Right ventricle myocardium superior (tissue), 1 donor: ENCODE measurements at regions of chr12 and their contacts with region 1.

Region 1: DNA sequence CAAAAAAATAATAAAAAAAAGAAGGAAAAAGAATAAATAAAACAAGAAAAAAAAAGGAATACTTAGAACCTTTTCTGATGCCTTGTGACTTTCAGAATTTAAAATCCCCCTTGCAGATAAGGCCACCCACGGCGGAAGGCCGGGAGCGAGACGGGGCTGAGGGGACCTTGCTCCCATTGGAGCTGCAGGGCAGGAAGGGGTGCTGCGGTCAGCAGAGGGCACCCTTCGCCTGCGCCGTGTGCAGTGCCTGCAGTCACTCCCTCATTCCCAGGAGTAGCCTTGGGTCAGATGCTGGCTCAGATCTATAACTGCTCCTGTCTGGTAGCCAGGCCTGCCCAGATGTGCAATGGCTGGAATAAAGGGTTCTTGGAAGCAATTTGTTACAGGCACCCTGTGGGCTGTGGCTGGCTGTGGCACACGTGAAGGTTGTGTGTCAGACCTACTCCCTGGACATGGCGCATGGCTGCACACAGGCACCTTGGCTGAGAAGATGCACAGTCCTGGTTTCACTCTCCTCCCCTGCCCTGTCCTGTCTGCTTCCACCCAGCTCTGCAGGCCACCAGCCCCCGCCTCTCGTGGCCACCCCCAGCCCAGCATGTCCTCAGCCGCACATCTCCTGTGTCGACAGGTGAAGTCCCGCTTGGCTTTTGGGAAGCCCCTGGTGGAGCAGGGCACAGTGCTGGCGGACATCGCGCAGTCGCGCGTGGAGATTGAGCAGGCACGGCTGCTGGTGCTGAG is 13.4 kb upstream of the ALDH2 start:
- DNase-seq: peak; percentile 78
- ATAC-seq: peak; percentile 77

Region 2: GRCh38 chr12:111788178-111788654 is 34.9 kb after region 1 on chr12:
- intact Hi-C with region 1: loop called (anchors 5 kb)
- DNase-seq: peak; percentile 70
- ATAC-seq: peak; percentile 81

Region 3: GRCh38 chr12:111799758-111800157 is 46.4 kb after region 1 on chr12:
- intact Hi-C with region 1: no loop called
- DNase-seq: no peak
- ATAC-seq: no peak

Region 4: DNA sequence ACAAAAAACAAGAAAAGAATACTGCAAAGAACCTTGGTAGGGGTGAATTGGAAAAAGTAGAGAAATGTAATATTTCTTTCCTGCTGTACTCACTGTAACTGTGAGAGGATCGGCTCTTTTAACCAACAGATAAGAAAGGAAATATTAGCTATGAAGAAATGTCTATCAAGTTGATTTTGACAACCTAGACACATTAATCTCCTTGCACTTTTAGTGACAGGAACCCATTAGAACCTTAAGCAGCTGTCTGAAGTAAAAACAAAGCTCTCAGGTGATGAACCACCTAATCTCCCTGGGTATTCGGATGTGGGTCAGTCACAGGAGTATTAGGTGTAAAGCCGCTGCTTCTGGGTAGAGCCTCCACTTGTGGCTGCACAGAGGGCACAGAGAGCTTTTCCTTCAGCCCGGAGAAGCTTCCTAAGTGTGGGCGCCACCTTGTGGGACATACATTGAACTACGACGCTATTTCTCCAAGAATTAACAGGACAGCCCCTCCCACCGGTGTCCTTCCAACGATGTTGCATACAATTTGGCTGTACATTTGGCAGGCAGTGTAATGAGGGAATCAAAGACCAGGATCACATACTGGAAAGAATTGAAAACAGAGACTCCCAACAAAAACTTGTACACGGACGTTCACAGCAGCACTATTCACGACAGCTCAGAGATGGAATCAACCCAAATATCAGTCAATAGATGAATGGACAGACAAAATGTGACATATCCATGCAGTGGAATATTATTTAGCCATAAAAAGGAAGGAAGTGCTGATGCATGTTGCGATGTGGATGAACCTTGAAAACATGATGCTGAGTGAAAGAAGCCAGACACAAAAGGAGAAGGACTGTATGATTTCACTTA is 59.8 kb after region 1 on chr12:
- intact Hi-C with region 1: loop called (anchors 5 kb)
- DNase-seq: peak; percentile 75
- ATAC-seq: peak; percentile 97

Region 5: GRCh38 chr12:111904446-111904975 is 151.2 kb after region 1 on chr12:
- intact Hi-C with region 1: no loop called
- DNase-seq: no peak
- ATAC-seq: peak; percentile 35

Region 6: DNA sequence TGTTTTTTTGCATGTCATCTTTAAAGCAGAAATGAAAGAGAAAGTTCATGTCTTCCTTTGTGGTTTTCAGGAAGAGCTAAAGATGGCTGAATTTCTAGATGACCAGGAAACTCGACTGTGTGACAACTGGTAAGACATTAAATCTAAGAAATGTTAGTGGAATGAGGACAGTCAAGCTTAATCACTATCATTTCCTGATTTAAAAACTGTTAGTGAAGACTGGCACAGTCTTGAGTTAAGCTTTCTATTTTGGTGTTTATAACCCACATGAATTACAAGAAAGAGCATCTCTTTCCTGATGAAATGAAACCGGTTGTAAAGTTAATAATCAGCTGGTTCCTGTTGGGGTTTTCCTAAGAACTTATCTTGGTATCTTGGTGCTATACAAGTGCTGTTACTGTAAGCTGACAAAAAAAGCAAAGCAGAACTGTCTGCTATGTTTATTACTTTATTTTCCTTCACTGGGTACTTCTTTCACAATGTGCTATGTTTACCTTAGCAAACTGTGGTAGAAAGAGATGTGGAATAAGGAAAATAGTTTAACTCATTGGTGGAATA is 377.2 kb after region 1 on chr12:
- intact Hi-C with region 1: no loop called
- DNase-seq: no peak
- ATAC-seq: no peak